Natural killer cell (primary cell): ENCODE measurements at regions of chr17 and their contacts with region 1.

Region 1: GRCh38 chr17:40608061-40608588 is 39.5 kb downstream of the SMARCE1 start:
- DNase-seq: peak; percentile 51 to 91
- ATAC-seq: peak; percentile 80 to 93 (median 89)
- H3K4me3 ChIP-seq: no peak overlapping the region
- H3K4me3 Mint-ChIP-seq: peak overlapping the region; percentile 78
- H3K27ac ChIP-seq: peak overlapping the region; percentile 85
- H3K27ac Mint-ChIP-seq: peak overlapping the region; percentile 89 to 92
- H3K4me1 ChIP-seq: peaks cover 53% of the 10 kb centered on the region
- H3K4me1 Mint-ChIP-seq: peaks cover 46 to 47% of the 10 kb centered on the region in 2 donors
- H3K27me3 ChIP-seq: no peaks in the 10 kb centered on the region
- H3K27me3 Mint-ChIP-seq: peaks cover 0 to 3% of the 10 kb centered on the region in 2 donors
- CTCF ChIP-seq: no peak

Region 2: DNA sequence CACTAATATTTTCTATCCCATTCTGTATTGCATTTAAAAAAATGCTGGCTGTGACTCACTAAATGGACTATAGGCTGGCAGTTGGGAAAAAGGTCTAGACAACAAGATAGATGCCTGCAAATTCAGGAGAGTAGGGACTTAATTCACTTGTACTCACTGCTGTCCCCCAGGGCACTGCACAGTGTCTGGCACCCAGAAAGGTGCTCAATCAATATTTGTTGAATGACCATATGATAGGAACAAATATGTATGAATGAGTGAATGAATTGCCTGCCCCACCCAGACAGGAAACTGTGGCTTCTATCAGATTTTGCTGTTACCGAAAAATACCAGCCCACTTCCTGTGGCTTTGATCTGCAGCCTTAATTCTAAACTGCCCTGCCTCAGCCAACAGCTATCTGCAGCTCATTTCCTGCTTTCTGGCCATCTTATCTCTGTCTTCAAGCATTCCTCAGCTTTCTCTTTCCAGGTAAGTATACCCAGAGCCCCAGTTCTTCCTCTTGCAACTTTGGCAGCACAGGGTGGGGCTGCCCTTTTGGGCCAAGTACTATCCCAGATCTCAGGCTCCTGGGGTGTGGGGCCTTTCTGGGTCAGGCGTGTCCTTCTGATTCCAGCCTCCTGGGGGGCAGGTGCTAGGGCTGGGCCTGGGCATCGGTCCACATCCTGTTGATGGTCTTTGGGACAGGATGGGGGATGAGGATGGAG is 91.4 kb before region 1 on chr17:
- intact Hi-C with region 1: loop called (anchors 1 kb)
- DNase-seq: peak; percentile 60 to 92
- ATAC-seq: peak; percentile 71 to 85 (median 79)
- H3K4me3 ChIP-seq: peak overlapping the region; percentile 30
- H3K4me3 Mint-ChIP-seq: peak overlapping the region; percentile 87
- H3K27ac ChIP-seq: peak overlapping the region; percentile 15
- H3K27ac Mint-ChIP-seq: peak overlapping the region; percentile 70 to 86
- H3K4me1 ChIP-seq: peaks cover 64% of the 10 kb centered on the region
- H3K4me1 Mint-ChIP-seq: peaks cover 63 to 71% of the 10 kb centered on the region in 2 donors
- H3K27me3 ChIP-seq: no peaks in the 10 kb centered on the region
- H3K27me3 Mint-ChIP-seq: peaks cover 0 to 14% of the 10 kb centered on the region in 2 donors
- CTCF ChIP-seq: no peak

Region 3: DNA sequence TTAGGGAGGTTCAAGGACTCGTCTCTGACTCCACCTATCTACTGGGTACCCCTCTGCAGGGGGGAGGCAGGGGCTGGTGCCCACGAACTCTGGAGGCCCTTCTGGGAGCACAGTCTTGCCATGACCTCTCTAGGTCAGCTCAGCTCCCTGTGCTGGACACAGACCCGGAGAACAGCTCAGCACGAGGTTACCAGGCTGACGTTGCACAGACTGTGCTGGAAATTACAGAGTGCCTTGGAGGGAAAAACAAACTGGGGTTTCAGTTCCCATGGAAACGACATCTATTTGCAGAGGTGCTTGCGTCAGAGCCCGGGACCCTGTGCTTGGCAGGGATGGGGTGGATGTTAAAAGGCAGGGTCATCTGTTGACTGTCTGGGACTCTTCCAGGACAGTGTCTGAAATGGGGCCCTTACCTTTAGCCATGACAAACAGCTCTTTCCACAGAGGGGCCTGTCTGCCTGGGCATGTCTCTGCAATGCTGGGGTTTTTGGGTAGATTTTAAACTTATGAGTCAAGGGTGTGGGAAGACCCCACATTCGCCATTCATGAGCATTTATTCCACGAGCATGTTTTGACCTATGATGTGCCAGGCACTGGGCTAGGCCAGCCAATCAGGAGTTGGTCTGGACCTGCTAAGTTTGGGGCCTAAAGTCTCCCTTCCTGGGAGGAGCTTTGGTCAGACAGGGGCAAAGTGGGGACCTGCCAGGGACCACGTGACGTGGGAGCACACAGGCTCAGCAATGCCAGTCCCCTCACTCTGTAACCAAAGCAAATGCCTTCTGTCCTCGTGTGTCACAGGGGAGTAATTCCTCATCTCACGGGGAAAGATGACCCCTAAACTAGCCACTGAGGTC is 65.3 kb before region 1 on chr17:
- intact Hi-C with region 1: loop called (anchors 1 kb)
- DNase-seq: peak in 1 of 2 donors; percentile 73
- ATAC-seq: peak in 1 of 3 donors; percentile 24
- H3K4me3 ChIP-seq: no peak overlapping the region
- H3K4me3 Mint-ChIP-seq: peak overlapping the region; percentile 35
- H3K27ac ChIP-seq: peak overlapping the region; percentile 65
- H3K27ac Mint-ChIP-seq: peak overlapping the region; percentile 64 to 87
- H3K4me1 ChIP-seq: peaks cover 77% of the 10 kb centered on the region
- H3K4me1 Mint-ChIP-seq: peaks cover 43 to 49% of the 10 kb centered on the region in 2 donors
- H3K27me3 ChIP-seq: peaks cover 7% of the 10 kb centered on the region
- H3K27me3 Mint-ChIP-seq: peaks cover 0 to 13% of the 10 kb centered on the region in 2 donors
- CTCF ChIP-seq: no peak

Region 4: GRCh38 chr17:40564883-40565768 is 43.0 kb before region 1 on chr17 and contains the start of gene CCR7:
- intact Hi-C with region 1: loop called (anchors 1 kb)
- DNase-seq: peak; percentile 66 to 93
- ATAC-seq: peak; percentile 48 to 59 (median 59)
- H3K4me3 ChIP-seq: peak within 1 kb of the TSS; percentile 62
- H3K4me3 Mint-ChIP-seq: peak within 1 kb of the TSS; percentile 72
- H3K27ac ChIP-seq: peak within 1 kb of the TSS; percentile 91
- H3K27ac Mint-ChIP-seq: peak within 1 kb of the TSS; percentile 80 to 91
- H3K4me1 ChIP-seq: peaks cover 71% of the 10 kb centered on the region
- H3K4me1 Mint-ChIP-seq: peaks cover 56 to 64% of the 10 kb centered on the region in 2 donors
- H3K27me3 ChIP-seq: peaks cover 6% of the 10 kb centered on the region
- H3K27me3 Mint-ChIP-seq: peaks cover 26 to 33% of the 10 kb centered on the region in 2 donors
- CTCF ChIP-seq: no peak
- total RNA-seq, gene CCR7: 3.2 to 8.0 (median 6.6) TPM

Region 5: DNA sequence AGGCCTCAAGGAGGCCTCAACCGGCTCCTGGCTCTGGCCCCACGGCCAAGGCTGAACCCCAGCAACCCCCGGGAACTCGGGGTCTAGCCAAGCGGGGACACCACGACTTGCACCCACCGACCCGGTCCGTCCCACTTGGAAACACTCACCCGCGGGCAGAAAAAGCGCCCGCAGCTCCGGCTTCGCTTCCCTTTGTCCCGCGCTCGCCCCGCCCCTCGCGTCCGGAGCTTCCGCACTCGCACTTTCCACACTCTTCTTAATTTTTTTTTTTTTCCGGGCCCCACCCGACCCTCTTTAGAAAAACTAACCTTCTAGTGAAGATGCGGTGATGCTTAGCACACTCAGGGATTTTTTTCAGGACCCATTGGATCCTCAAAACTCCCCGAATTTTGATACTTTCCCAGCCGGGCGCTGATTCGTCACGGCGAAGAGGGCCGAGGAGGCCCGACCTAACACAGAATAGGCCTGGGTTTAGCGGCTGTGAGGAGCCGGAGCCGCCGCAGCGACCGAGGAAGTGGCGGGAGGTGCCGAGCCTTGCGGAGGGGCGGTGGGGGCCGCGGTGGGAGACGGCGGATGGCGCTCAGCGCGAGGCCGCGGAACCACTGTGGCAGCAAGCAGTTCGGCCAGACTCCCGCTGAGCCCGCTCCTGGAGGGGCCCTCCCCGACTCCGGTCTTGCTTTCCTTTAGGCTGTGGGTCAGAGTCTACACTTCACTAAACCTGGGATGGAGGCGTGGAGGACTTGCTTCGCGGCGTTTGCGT is 39.7 kb after region 1 on chr17 and contains the start of gene SMARCE1:
- intact Hi-C with region 1: loop called (anchors 5 kb)
- DNase-seq: peak; percentile 79 to 85
- ATAC-seq: peak; percentile 71 to 87 (median 85)
- H3K4me3 ChIP-seq: peak within 1 kb of the TSS; percentile 87
- H3K4me3 Mint-ChIP-seq: peak within 1 kb of the TSS; percentile 98
- H3K27ac ChIP-seq: peak within 1 kb of the TSS; percentile 97
- H3K27ac Mint-ChIP-seq: peak within 1 kb of the TSS; percentile 99
- H3K4me1 ChIP-seq: peaks cover 19% of the 10 kb centered on the region
- H3K4me1 Mint-ChIP-seq: peaks cover 38 to 50% of the 10 kb centered on the region in 2 donors
- H3K27me3 ChIP-seq: no peaks in the 10 kb centered on the region
- H3K27me3 Mint-ChIP-seq: no peaks in the 10 kb centered on the region
- CTCF ChIP-seq: no peak
- total RNA-seq, gene SMARCE1: 87.8 to 102 (median 101) TPM